ENCODE measurements at regions of chr7 and their contacts with region 1.

Region 1: GRCh38 chr7:55887821-55888247 is 578 bp downstream of the ZNF713 start:
- DNase-seq: no peak
- ATAC-seq: no peak
- H3K4me3 ChIP-seq: peak overlapping the region; percentile 77 to 85
- H3K27ac ChIP-seq: peak overlapping the region in 1 of 2 donors; percentile 12
- H3K4me1 ChIP-seq: no peaks in the 10 kb centered on the region
- H3K27me3 ChIP-seq: no peaks in the 10 kb centered on the region

Region 2: GRCh38 chr7:55871932-55872485 is 15.8 kb before region 1 on chr7:
- intact Hi-C with region 1: no loop called
- DNase-seq: no peak
- ATAC-seq: no peak
- H3K4me3 ChIP-seq: no peak overlapping the region
- H3K27ac ChIP-seq: no peak overlapping the region
- H3K4me1 ChIP-seq: no peaks in the 10 kb centered on the region
- H3K27me3 ChIP-seq: no peaks in the 10 kb centered on the region

Region 3: GRCh38 chr7:55951637-55952351 is 64.0 kb after region 1 on chr7 and contains the start of gene MRPS17:
- intact Hi-C with region 1: loop called in 1 of 2 experiments (anchors 5 kb)
- DNase-seq: peak; percentile 93 to 97
- ATAC-seq: peak; percentile 99
- H3K4me3 ChIP-seq: peak within 1 kb of the TSS; percentile 40 to 42
- H3K27ac ChIP-seq: peak within 1 kb of the TSS in 1 of 2 donors; percentile 29
- H3K4me1 ChIP-seq: no peaks in the 10 kb centered on the region
- H3K27me3 ChIP-seq: no peaks in the 10 kb centered on the region
- total RNA-seq, gene MRPS17: 8.6 to 9.0 TPM